Activated T-helper 1 cell treated with anti-CD3 and anti-CD28 coated beads, Interleukin-12 subunit alpha, Interleukin-12 subunit beta, Interleukin-2, Interleukin-4 antibody, amounts not matched to agents 30 ng/mL and 10 ng/mL and 1 ng/mL, durations not matched to agents 14 hours and 24 hours and 36 hours (primary cell): ENCODE measurements at regions of chrX and their contacts with region 1.

Region 1: DNA sequence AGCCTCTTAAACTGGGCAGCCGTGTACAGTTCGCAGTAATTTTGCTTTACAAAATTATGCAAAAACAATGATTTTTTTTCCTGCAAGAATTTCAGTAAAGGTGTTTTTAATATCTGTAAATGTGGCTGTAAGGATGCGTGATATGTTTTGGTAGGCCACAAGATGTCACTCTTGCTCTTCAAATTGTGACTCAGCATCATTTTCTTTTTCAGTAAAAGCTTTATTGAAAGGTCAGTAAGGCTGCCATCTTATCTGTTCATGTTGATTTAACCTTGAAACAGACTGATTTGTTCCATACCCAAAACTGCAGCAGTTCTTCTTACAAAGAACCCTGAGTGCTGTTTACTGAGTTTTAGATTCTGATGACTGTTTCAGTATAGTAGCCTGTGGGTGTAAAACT is 39.9 kb downstream of the TXLNG start:
- DNase-seq: no peak
- H3K4me3 Mint-ChIP-seq: no peak overlapping the region
- H3K27ac Mint-ChIP-seq: peak overlapping the region; percentile 58
- H3K4me1 Mint-ChIP-seq: peaks cover 16% of the 10 kb centered on the region
- H3K27me3 Mint-ChIP-seq: no peaks in the 10 kb centered on the region

Region 2: DNA sequence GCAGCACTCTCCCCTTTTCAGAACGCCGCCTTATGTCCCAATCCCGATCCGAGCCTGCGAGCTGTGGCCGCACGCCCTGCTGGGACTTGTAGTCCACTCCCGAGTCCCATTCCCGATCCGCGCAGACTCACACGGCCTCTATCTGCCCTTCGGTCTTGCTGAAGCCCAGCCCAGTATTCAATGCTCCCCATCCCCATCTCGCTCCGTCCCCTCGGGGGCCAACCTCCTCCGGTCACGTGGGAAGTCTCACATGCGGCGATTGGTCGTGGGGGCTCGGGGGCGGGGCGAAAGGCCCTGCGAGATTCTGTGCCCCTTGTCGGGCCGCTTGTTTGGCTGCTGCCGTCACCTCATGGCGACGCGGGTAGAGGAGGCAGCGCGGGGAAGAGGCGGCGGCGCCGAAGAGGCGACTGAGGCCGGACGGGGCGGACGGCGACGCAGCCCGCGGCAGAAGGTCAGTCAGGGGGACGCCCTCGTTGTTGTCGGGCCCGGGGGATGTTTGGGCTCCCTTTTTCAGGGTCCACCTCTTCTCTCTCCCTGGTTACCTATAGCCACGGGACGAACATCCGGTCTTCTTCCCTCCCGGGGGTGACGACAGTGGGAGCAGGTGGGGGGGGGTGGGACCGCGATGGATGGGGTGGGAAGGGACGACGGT is 39.9 kb before region 1 on chrX and contains the start of gene TXLNG:
- intact Hi-C with region 1: loop called (anchors 5 kb)
- DNase-seq: peak; percentile 91
- H3K4me3 Mint-ChIP-seq: peak within 1 kb of the TSS; percentile 92
- H3K27ac Mint-ChIP-seq: peak within 1 kb of the TSS; percentile 94
- H3K4me1 Mint-ChIP-seq: peaks cover 11% of the 10 kb centered on the region
- H3K27me3 Mint-ChIP-seq: no peaks in the 10 kb centered on the region
- total RNA-seq, gene TXLNG: 23.8 and 25.4 TPM in 2 replicates

Region 3: GRCh38 chrX:16807548-16807947 is 18.7 kb before region 1 on chrX:
- intact Hi-C with region 1: no loop called
- DNase-seq: no peak
- H3K4me3 Mint-ChIP-seq: no peak overlapping the region
- H3K27ac Mint-ChIP-seq: peak overlapping the region; percentile 6
- H3K4me1 Mint-ChIP-seq: peaks cover 14% of the 10 kb centered on the region
- H3K27me3 Mint-ChIP-seq: no peaks in the 10 kb centered on the region

Region 4: GRCh38 chrX:16892504-16893362 is 66.5 kb after region 1 on chrX:
- intact Hi-C with region 1: loop called (anchors 1 kb)
- DNase-seq: peak; percentile 34
- H3K4me3 Mint-ChIP-seq: no peak overlapping the region
- H3K27ac Mint-ChIP-seq: no peak overlapping the region
- H3K4me1 Mint-ChIP-seq: peaks cover 14% of the 10 kb centered on the region
- H3K27me3 Mint-ChIP-seq: peaks cover 3% of the 10 kb centered on the region